ENCODE measurements at regions of chr6 and their contacts with region 1.

Region 1: GRCh38 chr6:34055223-34055933 is 90.5 kb downstream of the GRM4 start:
- DNase-seq: peak; percentile 60 to 87
- H3K4me3 ChIP-seq: no peak overlapping the region
- H3K27ac ChIP-seq: no peak overlapping the region
- H3K4me1 ChIP-seq: peaks cover 6 to 18% (median 11%) of the 10 kb centered on the region in 4 experiments
- H3K27me3 ChIP-seq: peaks cover 0 to 2% (median 0%) of the 10 kb centered on the region in 4 experiments; a peak in 1 of 7 replicates
- CTCF ChIP-seq: peak in 2 of 3 experiments; percentile 80 to 87; a peak in 3 of 4 replicates
- EP300 ChIP-seq: no peak
- POLR2A ChIP-seq: no peak
- RAD21 ChIP-seq: peak; percentile 68 to 75

Region 2: DNA sequence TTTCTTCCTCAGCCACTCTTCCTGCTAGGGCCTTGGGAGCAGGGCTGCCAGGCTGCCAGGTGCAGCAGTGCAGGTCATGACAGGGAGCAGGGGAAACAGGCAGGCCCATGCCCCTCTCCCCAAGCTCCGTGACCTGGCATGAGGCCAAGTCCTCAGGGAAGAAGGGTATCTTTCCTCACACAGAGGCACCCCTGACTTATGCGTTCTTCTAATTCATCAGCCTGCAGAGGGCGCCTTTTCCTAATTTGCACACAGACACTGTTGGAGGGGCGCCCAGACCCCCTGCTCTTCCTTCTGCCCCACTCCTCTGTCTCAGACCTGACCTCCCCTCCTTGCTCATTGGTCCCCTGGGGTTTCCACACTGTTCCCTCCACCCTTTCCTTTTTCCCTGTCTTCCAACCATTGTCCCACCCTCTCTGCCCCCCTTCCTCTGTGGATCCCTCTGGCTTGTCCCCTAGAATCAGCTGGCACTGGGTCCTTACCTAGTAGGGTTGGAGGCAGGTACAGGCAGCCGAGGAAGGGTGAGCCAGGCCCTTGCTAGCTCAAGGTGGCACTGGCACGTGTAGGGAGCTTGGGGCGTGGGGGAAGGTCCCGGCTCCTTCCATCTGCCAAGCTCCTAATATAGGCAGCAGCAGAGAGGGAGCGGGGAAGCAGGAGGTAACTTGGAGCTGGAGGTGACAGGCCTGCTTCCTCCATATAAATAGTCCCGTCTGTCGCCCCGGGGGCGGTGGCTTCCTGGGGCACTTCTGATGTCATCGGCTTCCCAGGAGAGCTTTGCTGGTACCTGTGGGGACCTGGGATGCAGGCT is 96.6 kb before region 1 on chr6:
- CTCF ChIA-PET with region 1: interaction called, 35 read pairs
- POLR2A ChIA-PET with region 1: no interaction called
- DNase-seq: peak in 1 of 2 experiments; percentile 82
- H3K4me3 ChIP-seq: no peak overlapping the region
- H3K27ac ChIP-seq: no peak overlapping the region
- H3K4me1 ChIP-seq: peaks cover 8 to 12% (median 10%) of the 10 kb centered on the region in 4 experiments
- H3K27me3 ChIP-seq: no peaks in the 10 kb centered on the region; a peak in 1 of 7 replicates
- CTCF ChIP-seq: peak in 2 of 3 experiments; percentile 70 to 79; a peak in 3 of 4 replicates
- EP300 ChIP-seq: no peak
- POLR2A ChIP-seq: no peak
- RAD21 ChIP-seq: peak; percentile 56 to 72

Region 3: DNA sequence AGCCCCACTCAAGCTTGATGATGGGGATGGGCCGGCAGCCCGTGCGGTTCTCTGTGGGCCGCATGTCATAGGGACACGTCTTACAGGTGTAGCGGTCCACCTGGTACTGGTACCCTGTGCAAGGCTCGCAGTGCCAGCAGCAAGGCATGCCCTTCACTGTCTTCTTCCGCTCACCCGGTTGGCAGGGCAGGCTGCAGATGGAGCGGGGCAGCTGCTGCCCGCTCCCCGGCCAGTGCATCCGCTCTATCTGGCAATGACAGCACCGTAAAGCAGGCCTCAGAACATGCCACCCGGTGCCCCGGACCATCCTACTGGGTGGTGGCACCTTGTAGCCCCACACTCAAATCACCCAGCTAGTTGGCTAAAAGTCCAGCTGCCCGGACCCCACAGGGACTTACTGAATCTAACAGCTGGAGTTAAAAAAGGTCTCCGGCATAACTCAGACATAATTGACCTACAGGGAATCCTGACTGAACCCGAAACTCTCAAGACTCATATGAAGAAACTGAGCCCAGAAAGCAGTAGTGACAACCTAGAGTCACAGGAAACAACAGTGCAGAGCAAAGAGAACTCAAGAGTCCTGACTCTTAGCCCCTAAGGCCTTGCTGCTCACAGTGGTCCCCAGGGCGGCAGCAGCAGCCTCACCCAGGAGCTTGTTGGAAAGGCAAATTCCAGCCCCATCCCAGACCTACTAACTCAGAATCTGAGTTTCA is 18.9 kb before region 1 on chr6:
- CTCF ChIA-PET with region 1: interaction called, 22 read pairs
- POLR2A ChIA-PET with region 1: interaction called, 3 read pairs
- DNase-seq: no peak
- H3K4me3 ChIP-seq: no peak overlapping the region
- H3K27ac ChIP-seq: no peak overlapping the region
- H3K4me1 ChIP-seq: peaks cover 0 to 6% (median 0%) of the 10 kb centered on the region in 4 experiments; a peak in 1 of 7 replicates
- H3K27me3 ChIP-seq: no peaks in the 10 kb centered on the region
- CTCF ChIP-seq: no peak
- EP300 ChIP-seq: no peak
- POLR2A ChIP-seq: no peak
- RAD21 ChIP-seq: no peak

Region 4: GRCh38 chr6:34067814-34068213 is 12.4 kb after region 1 on chr6:
- CTCF ChIA-PET with region 1: interaction called, 47 read pairs
- POLR2A ChIA-PET with region 1: interaction called, 5 read pairs
- DNase-seq: no peak
- H3K4me3 ChIP-seq: no peak overlapping the region
- H3K27ac ChIP-seq: no peak overlapping the region
- H3K4me1 ChIP-seq: peaks cover 0 to 14% (median 7%) of the 10 kb centered on the region in 4 experiments; a peak in 6 of 7 replicates
- H3K27me3 ChIP-seq: no peaks in the 10 kb centered on the region
- CTCF ChIP-seq: peak in 2 of 3 experiments; percentile 48 to 50; a peak in 3 of 4 replicates
- EP300 ChIP-seq: no peak
- POLR2A ChIP-seq: no peak
- RAD21 ChIP-seq: peak; percentile 31 to 56

Region 5: GRCh38 chr6:34090529-34090928 is 35.2 kb after region 1 on chr6:
- CTCF ChIA-PET with region 1: interaction called, 11 read pairs
- POLR2A ChIA-PET with region 1: interaction called, 4 read pairs
- DNase-seq: no peak
- H3K4me3 ChIP-seq: no peak overlapping the region
- H3K27ac ChIP-seq: no peak overlapping the region
- H3K4me1 ChIP-seq: peaks cover 0 to 8% (median 0%) of the 10 kb centered on the region in 4 experiments; a peak in 2 of 7 replicates
- H3K27me3 ChIP-seq: no peaks in the 10 kb centered on the region
- CTCF ChIP-seq: no peak
- EP300 ChIP-seq: no peak
- POLR2A ChIP-seq: no peak
- RAD21 ChIP-seq: no peak

Region 6: GRCh38 chr6:34138914-34139510 is 83.6 kb after region 1 on chr6:
- CTCF ChIA-PET with region 1: interaction called, 61 read pairs
- POLR2A ChIA-PET with region 1: interaction called, 3 read pairs
- DNase-seq: no peak
- H3K4me3 ChIP-seq: no peak overlapping the region; a peak in 1 of 8 replicates
- H3K27ac ChIP-seq: no peak overlapping the region
- H3K4me1 ChIP-seq: peaks cover 9 to 61% (median 45%) of the 10 kb centered on the region in 4 experiments
- H3K27me3 ChIP-seq: peaks cover 0 to 14% (median 8%) of the 10 kb centered on the region in 4 experiments; a peak in 5 of 7 replicates
- CTCF ChIP-seq: no peak
- EP300 ChIP-seq: no peak
- POLR2A ChIP-seq: no peak
- RAD21 ChIP-seq: no peak

Region 7: GRCh38 chr6:34154668-34155447 is 99.5 kb after region 1 on chr6:
- CTCF ChIA-PET with region 1: interaction called, 120 read pairs
- POLR2A ChIA-PET with region 1: interaction called, 6 read pairs
- DNase-seq: peak in 1 of 2 experiments; percentile 99
- H3K4me3 ChIP-seq: peak overlapping the region; percentile 3 to 72 (median 48)
- H3K27ac ChIP-seq: no peak overlapping the region
- H3K4me1 ChIP-seq: peaks cover 3 to 30% (median 10%) of the 10 kb centered on the region in 4 experiments
- H3K27me3 ChIP-seq: peaks cover 8 to 41% (median 26%) of the 10 kb centered on the region in 4 experiments
- CTCF ChIP-seq: peak in 2 of 3 experiments; percentile 93 to 98; a peak in 3 of 4 replicates
- EP300 ChIP-seq: no peak
- POLR2A ChIP-seq: no peak
- RAD21 ChIP-seq: peak; percentile 98 to 99